PC-9 (cell line): ENCODE measurements at regions of chr3 and their contacts with region 1.

Region 1: DNA sequence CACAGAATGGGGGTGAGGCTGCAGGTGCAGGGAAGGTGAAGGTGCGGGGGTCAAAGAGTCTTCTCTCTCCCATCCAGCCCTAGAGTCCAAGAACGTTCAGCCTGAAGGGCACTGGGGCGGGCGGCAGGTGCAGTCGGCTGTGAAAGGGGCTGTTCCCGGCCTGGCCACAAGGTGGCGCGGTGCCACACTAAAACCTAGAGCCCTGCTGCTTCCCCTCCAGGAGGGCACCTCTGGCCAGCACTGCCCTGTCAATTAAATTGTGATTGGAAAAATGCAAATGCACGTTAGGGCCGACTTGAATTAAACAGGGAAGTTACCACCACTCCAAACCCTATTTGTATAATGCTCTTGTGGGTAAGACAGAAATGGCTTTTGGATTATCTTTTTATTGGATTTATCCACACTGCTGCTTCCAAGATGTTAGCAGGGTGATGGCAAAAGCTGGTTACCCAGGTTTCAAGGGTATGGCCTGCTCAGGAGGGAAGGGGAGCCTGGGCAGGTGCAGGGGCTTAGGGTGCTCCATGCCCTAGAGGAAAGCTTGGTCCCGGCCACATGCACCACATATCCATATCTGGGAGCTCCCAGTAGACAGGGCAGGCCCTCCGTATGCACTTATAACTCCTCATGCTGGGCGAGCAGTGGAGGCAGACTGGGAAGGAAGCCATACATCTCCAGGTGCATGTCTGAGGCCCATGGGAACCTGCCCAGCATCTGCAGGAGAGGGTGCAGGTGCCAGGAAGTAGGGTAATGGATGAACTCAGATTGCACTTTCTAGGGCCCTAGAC is 119.8 kb downstream of the ADCY5 start:
- DNase-seq: peak; percentile 42 to 80
- H3K4me3 ChIP-seq: no peak overlapping the region
- H3K27ac ChIP-seq: no peak overlapping the region
- H3K4me1 ChIP-seq: no peaks in the 10 kb centered on the region
- H3K27me3 ChIP-seq: no peaks in the 10 kb centered on the region
- CTCF ChIP-seq: peak; percentile 91

Region 2: DNA sequence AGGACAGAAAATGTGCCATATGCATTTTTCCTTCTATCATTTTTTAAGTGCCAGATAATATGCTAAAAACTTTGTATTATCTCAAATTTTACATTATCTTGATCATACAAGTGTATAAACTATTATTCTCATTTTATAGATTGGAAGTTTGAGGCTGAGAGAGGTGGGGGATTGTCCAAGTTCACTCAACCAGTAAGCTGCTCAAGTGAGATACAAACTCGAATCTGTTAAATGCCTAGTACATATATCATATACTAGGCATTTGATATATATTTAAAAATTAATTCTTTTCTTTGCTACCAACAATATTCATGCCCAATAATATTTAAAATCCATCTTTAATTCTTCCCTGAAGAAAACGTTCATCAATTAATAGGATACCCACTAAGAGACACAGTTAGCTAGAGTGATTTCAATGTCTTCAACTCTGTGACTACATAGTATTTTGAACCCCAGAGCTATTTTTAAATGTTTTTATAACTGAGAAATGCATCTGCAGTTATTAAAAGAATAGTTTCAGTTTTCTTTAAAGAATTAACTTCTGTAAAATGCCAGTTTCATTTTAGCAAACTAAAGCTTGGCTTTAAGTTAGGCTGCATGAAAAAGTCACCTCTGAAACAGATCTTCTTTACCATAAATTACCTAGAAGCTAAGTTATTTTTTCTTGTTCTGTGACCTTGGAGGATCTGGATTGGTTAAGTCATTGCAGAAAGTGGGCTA is 1534.6 kb before region 1 on chr3:
- CTCF ChIA-PET with region 1: no interaction called
- POLR2A ChIA-PET with region 1: no interaction called
- intact Hi-C with region 1: no loop called
- DNase-seq: no peak
- H3K4me3 ChIP-seq: no peak overlapping the region
- H3K27ac ChIP-seq: no peak overlapping the region
- H3K4me1 ChIP-seq: no peaks in the 10 kb centered on the region
- H3K27me3 ChIP-seq: no peaks in the 10 kb centered on the region
- CTCF ChIP-seq: no peak

Region 3: DNA sequence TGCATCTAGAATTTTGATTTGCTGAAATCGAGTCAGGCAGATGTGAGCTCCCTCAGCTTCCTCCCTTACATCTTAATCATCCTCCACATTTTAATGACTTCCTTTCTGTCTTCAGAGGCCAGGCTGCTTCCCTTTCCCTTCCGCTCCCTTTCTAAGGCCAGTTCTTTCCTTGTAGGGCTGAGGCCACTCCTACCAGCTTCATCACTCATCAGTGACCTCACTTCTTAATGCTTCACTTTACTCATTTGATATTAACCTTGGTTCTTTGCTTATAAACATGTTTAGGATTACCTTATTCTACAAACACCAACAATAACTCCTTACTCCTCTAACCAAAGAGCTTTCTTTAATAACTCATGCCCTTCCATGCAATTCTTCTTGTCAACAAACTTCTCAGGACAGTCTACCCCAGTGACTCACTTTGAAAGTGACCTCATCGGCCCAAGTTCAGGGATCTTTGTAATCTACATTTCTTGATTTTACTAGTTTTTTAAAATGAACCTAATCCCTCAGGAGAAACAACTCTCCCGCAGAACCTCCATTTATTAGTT is 1330.9 kb before region 1 on chr3:
- CTCF ChIA-PET with region 1: no interaction called
- POLR2A ChIA-PET with region 1: no interaction called
- intact Hi-C with region 1: no loop called
- DNase-seq: no peak
- H3K4me3 ChIP-seq: no peak overlapping the region
- H3K27ac ChIP-seq: no peak overlapping the region
- H3K4me1 ChIP-seq: peaks cover 12% of the 10 kb centered on the region; the same call in 1 of the 2 replicates
- H3K27me3 ChIP-seq: no peaks in the 10 kb centered on the region
- CTCF ChIP-seq: no peak

Region 4: DNA sequence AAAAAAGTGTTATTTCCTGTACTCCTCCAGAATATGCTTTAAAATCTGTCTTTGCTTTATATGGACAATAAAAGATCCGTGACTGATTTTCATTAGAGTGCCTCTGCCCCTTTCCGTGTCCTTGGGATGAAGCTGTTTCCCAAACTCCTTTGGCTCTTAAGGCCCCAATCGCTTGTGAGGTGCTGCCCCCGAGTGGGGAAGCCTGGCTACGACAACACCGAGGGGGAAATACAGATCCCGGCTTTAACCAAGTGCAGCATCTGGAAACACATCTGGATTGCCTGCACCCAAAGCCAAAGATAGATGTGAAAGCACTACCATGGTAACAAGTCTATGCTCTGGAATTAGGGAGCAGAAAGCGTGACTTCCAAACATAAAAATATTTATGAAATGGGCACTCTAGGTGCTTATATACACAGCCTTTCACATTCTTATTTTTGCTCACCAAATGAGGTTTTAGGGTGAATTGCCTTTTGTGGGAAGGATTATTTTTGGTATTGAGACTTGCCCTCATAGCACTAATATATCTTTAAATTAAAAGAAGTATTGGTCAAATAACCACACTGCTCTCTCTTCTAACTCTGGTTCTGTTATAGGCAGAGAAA is 160.5 kb after region 1 on chr3:
- CTCF ChIA-PET with region 1: interaction called, 3 read pairs
- POLR2A ChIA-PET with region 1: no interaction called
- intact Hi-C with region 1: loop called (anchors 1 kb)
- DNase-seq: peak; percentile 40 to 60
- H3K4me3 ChIP-seq: no peak overlapping the region
- H3K27ac ChIP-seq: no peak overlapping the region
- H3K4me1 ChIP-seq: no peaks in the 10 kb centered on the region
- H3K27me3 ChIP-seq: no peaks in the 10 kb centered on the region
- CTCF ChIP-seq: peak; percentile 93

Region 5: GRCh38 chr3:123559040-123559861 is 230.2 kb after region 1 on chr3:
- CTCF ChIA-PET with region 1: no interaction called
- POLR2A ChIA-PET with region 1: interaction called, 3 read pairs
- intact Hi-C with region 1: loop called (anchors 5 kb)
- DNase-seq: no peak
- H3K4me3 ChIP-seq: no peak overlapping the region
- H3K27ac ChIP-seq: no peak overlapping the region
- H3K4me1 ChIP-seq: no peaks in the 10 kb centered on the region
- H3K27me3 ChIP-seq: no peaks in the 10 kb centered on the region
- CTCF ChIP-seq: peak; percentile 82